Activated CD4-positive, alpha-beta T cell treated with anti-CD3 and anti-CD28 coated beads, Interleukin-2, amount 10 ng/mL, durations not matched to agents 24 days and 14 days (primary cell): ENCODE measurements at regions of chr13 and their contacts with region 1.

Region 1: DNA sequence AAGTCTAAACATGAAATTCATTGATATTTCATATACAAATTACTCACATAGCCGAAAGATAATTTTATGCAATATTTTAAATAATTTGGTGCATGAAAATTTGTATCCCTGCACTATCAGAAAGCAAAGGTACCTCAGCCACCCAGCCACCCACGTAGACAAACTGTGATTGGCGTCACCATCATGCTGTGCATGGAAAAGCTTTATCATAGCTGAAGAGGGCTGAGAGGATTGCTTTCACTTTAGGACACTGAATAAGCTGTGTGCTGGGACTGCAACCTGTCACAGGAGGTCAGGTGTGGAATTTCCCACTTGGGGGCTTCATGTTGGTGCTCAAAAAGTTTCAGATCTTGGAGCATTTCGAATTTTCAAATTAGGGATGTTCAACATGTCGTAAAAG is 96.3 kb downstream of the MYCBP2 start:
- DNase-seq: no peak
- H3K4me3 Mint-ChIP-seq: no peak overlapping the region
- H3K27ac Mint-ChIP-seq: peak overlapping the region; percentile 62
- H3K4me1 Mint-ChIP-seq: peaks cover 12% of the 10 kb centered on the region
- H3K27me3 Mint-ChIP-seq: no peaks in the 10 kb centered on the region

Region 2: GRCh38 chr13:77219401-77219800 is 11.2 kb before region 1 on chr13:
- intact Hi-C with region 1: loop called (anchors 1 kb)
- DNase-seq: no peak
- H3K4me3 Mint-ChIP-seq: no peak overlapping the region
- H3K27ac Mint-ChIP-seq: no peak overlapping the region
- H3K4me1 Mint-ChIP-seq: peaks cover 2% of the 10 kb centered on the region
- H3K27me3 Mint-ChIP-seq: no peaks in the 10 kb centered on the region